ENCODE measurements at regions of chr2 and their contacts with region 1.

Region 1: DNA sequence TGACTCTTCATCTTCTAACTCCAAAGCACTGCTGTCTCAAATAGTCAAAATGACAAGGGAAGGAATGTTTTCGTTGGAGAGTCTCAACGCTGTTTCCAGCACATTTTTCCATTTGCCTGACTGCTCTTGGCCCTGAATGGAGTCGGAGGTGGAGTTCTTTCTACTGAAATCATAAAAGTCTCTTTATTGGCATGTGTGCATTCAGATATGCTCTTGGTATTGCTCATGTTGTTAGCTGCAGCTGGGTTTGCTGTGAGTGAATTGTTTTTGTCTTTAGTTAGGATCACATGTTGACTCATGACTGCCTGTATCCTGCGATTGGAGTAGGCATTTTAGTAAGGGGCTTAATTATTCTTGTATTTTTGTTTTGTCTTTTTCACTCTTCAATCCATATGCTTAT is 16.8 kb downstream of the TMEM17 start:
- DNase-seq: no peak
- H3K4me3 ChIP-seq: no peak overlapping the region
- H3K27ac ChIP-seq: no peak overlapping the region
- H3K4me1 ChIP-seq: peaks cover 17% of the 10 kb centered on the region
- H3K27me3 ChIP-seq: no peaks in the 10 kb centered on the region
- CTCF ChIP-seq: no peak

Region 2: GRCh38 chr2:62313449-62314227 is 175.5 kb before region 1 on chr2:
- CTCF ChIA-PET with region 1: no interaction called
- POLR2A ChIA-PET with region 1: no interaction called
- intact Hi-C with region 1: no loop called
- DNase-seq: no peak
- H3K4me3 ChIP-seq: no peak overlapping the region
- H3K27ac ChIP-seq: no peak overlapping the region
- H3K4me1 ChIP-seq: peaks cover 5% of the 10 kb centered on the region
- H3K27me3 ChIP-seq: no peaks in the 10 kb centered on the region
- CTCF ChIP-seq: no peak

Region 3: GRCh38 chr2:62538756-62539155 is 49.6 kb after region 1 on chr2:
- CTCF ChIA-PET with region 1: interaction called, 10 read pairs
- POLR2A ChIA-PET with region 1: no interaction called
- intact Hi-C with region 1: no loop called
- DNase-seq: no peak
- H3K4me3 ChIP-seq: no peak overlapping the region
- H3K27ac ChIP-seq: no peak overlapping the region
- H3K4me1 ChIP-seq: no peaks in the 10 kb centered on the region
- H3K27me3 ChIP-seq: no peaks in the 10 kb centered on the region
- CTCF ChIP-seq: no peak